Activated naive CD4-positive, alpha-beta T cell treated with anti-CD3 and anti-CD28 coated beads for 36 hours (primary cell): ENCODE measurements at regions of chr6 and their contacts with region 1.

Region 1: GRCh38 chr6:99119109-99120031 is 171.6 kb upstream of the FBXL4 start:
- DNase-seq: peak; percentile 48
- H3K4me3 Mint-ChIP-seq: no peak overlapping the region
- H3K27ac Mint-ChIP-seq: no peak overlapping the region
- H3K4me1 Mint-ChIP-seq: no peaks in the 10 kb centered on the region
- H3K27me3 Mint-ChIP-seq: peaks cover 26% of the 10 kb centered on the region

Region 2: GRCh38 chr6:97497713-97498331 is 1621.5 kb before region 1 on chr6:
- CTCF ChIA-PET with region 1: interaction called, 4 read pairs
- intact Hi-C with region 1: loop called (anchors 1 kb)
- DNase-seq: peak; percentile 75
- H3K4me3 Mint-ChIP-seq: no peak overlapping the region
- H3K27ac Mint-ChIP-seq: no peak overlapping the region
- H3K4me1 Mint-ChIP-seq: no peaks in the 10 kb centered on the region
- H3K27me3 Mint-ChIP-seq: peaks cover 13% of the 10 kb centered on the region

Region 3: GRCh38 chr6:97705568-97705967 is 1413.8 kb before region 1 on chr6:
- CTCF ChIA-PET with region 1: interaction called, 3 read pairs
- intact Hi-C with region 1: loop called (anchors 5 kb)
- DNase-seq: no peak
- H3K4me3 Mint-ChIP-seq: no peak overlapping the region
- H3K27ac Mint-ChIP-seq: no peak overlapping the region
- H3K4me1 Mint-ChIP-seq: no peaks in the 10 kb centered on the region
- H3K27me3 Mint-ChIP-seq: no peaks in the 10 kb centered on the region

Region 4: GRCh38 chr6:98769544-98769943 is 349.8 kb before region 1 on chr6:
- CTCF ChIA-PET with region 1: no interaction called
- intact Hi-C with region 1: loop called (anchors 2 kb)
- DNase-seq: peak; percentile 32
- H3K4me3 Mint-ChIP-seq: no peak overlapping the region
- H3K27ac Mint-ChIP-seq: no peak overlapping the region
- H3K4me1 Mint-ChIP-seq: no peaks in the 10 kb centered on the region
- H3K27me3 Mint-ChIP-seq: peaks cover 22% of the 10 kb centered on the region

Region 5: DNA sequence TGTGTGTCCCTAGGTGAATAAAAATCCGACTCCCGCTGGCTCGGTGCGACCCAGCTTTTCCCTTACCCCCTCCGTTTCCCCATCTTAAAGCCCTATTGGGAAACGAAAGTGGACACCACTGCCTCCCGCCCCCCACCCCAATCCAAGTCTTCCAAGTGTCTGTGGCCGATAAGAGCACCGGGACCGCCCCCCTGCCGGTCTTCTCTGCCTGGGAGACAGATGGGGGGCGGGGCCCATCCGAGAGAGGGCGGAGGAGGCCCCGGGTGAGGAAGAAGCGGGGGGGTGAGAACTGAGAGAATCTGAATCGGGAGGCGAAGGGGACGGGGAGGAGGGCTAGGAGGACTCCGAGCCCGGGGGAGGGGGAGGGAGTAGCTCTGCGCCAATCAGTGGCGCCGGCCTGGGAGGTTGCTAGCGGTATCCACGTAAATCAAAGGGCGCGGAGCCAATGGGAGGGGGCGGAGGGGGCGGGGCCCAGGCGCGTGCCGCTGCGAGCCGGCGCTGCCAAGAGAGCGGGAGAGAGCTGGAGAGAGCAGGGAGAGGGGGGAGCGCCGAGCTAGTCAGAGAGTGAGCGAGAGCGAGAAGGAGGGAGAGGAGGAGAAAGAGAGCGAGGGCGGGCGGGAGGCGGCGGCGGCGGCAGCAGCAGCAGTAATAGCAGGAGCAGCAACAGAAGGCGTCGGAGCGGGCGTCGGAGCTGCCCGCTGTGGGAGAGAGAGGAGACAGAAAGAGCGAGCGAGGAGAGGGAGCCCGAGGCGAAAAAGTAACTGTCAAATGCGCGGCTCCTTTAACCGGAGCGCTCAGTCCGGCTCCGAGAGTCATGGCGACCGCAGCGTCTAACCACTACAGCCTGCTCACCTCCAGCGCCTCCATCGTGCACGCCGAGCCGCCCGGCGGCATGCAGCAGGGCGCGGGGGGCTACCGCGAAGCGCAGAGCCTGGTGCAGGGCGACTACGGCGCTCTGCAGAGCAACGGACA is 285.0 kb before region 1 on chr6 and contains the start of gene POU3F2:
- CTCF ChIA-PET with region 1: no interaction called
- intact Hi-C with region 1: loop called (anchors 1 kb)
- DNase-seq: peak; percentile 78
- H3K4me3 Mint-ChIP-seq: peak within 1 kb of the TSS; percentile 73
- H3K27ac Mint-ChIP-seq: no peak within 1 kb of the TSS
- H3K4me1 Mint-ChIP-seq: peaks cover 34% of the 10 kb centered on the region
- H3K27me3 Mint-ChIP-seq: peaks cover 72% of the 10 kb centered on the region
- total RNA-seq, gene POU3F2: not detected

Region 6: DNA sequence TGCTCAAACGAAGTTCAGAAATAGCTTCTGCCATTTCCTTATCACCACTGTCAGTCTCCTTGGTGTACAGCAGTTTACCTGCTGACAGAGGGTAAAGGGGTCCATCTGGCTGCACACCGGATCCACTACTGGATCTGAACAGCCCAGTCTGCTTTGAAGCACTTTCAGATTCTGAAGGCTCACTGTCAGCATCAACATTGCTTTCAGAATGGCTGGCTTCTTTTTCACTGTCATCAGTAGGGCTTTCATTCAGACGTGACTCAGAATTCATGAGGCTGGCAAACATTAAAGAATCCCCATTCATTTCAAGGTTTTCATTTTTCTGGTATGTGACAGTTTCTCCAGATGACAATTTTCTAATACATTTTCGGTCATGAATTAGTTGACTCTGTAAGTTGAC is 326.7 kb after region 1 on chr6:
- CTCF ChIA-PET with region 1: no interaction called
- intact Hi-C with region 1: no loop called
- DNase-seq: no peak
- H3K4me3 Mint-ChIP-seq: no peak overlapping the region
- H3K27ac Mint-ChIP-seq: no peak overlapping the region
- H3K4me1 Mint-ChIP-seq: no peaks in the 10 kb centered on the region
- H3K27me3 Mint-ChIP-seq: no peaks in the 10 kb centered on the region